RWPE1 (cell line): ENCODE measurements at regions of chr9 and their contacts with region 1.

Region 1: GRCh38 chr9:134738869-134739659 is 97.5 kb downstream of the COL5A1 start:
- DNase-seq: peak; percentile 90
- H3K27ac ChIP-seq: peak overlapping the region; percentile 10
- CTCF ChIP-seq: peak; percentile 98

Region 2: DNA sequence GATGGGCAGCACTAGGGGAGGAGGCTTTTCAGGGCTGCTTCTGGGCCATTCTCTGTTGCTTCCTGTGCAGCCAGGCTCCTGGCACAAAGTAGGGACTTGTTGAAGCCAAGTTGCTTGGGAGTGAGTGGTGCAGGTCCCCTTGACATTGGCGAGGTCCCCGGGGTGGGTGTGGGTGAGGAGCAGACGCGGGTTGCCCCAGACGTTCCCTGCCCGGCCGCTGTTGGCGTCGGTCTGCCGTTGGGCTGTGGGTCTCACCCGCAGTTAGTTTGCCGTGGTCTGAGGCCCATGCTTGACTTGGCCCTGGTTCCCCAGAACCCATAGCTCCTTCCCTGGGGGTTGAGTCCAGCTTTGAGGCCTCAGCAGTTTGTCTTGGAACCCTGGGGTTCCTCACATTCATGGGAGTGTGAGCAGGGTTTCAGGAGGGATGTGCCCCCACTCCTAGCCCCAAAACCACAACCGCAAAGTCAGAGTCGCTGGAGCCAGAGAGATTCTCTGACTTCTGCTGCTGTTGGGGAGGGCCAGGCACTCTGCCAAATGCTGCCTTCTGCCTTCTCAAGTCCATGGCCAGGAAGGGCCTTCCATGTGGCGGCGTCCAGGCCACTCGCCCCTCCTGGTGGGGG is 335.3 kb before region 1 on chr9:
- CTCF ChIA-PET with region 1: no interaction called
- POLR2A ChIA-PET with region 1: no interaction called
- DNase-seq: no peak
- H3K27ac ChIP-seq: peak overlapping the region; percentile 97
- CTCF ChIP-seq: no peak

Region 3: DNA sequence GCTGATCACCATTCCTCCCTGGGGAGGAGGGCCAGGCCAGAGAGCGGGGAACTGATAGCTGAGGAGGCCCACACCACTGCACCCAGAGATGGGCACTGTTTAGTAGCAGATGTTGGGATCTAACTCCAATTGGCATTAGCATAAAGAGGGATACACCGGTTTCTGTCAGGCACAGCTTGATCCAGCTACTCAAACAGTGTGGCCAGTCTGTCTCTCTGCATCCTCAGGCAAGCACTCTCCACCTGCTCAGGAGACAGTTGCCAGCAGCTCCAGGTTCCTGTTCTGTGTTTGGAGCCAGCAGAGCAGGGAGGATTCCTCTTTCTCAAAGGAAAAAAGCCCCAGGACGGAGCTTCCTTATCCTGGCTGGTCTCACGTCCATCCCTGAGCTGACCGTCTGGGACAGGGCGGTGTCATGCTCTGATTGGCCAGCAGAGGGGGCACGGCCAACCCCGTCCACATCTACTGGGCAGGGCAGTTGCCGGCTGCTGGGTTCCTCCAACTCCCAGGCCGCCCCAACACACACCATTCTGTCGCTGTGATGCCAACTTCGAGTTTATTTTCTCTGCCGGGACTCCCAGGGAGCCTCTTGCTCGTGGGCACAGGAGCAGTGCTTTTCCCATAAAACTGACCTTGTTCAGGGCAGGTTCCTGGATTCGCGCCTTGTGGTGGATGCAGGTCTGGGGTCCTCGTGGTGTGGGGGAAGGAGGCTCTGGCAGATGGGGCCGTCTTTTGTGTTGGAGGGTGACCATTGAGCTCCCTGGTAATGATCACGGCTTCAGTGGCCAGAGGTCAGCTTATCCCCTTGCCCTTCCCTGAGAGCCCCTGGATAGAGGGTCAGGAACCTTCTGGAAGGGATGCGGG is 49.5 kb before region 1 on chr9:
- CTCF ChIA-PET with region 1: interaction called, 14 read pairs
- POLR2A ChIA-PET with region 1: interaction called, 5 read pairs
- DNase-seq: peak; percentile 87
- H3K27ac ChIP-seq: peak overlapping the region; percentile 20
- CTCF ChIP-seq: peak; percentile 97

Region 4: GRCh38 chr9:134698587-134699342 is 40.3 kb before region 1 on chr9:
- CTCF ChIA-PET with region 1: interaction called, 44 read pairs
- POLR2A ChIA-PET with region 1: no interaction called
- DNase-seq: peak; percentile 79
- H3K27ac ChIP-seq: peak overlapping the region; percentile 88
- CTCF ChIP-seq: peak; percentile 99

Region 5: GRCh38 chr9:134896005-134896833 is 157.2 kb after region 1 on chr9:
- CTCF ChIA-PET with region 1: no interaction called
- POLR2A ChIA-PET with region 1: no interaction called
- DNase-seq: peak; percentile 84
- H3K27ac ChIP-seq: peak overlapping the region; percentile 61
- CTCF ChIP-seq: no peak

Region 6: DNA sequence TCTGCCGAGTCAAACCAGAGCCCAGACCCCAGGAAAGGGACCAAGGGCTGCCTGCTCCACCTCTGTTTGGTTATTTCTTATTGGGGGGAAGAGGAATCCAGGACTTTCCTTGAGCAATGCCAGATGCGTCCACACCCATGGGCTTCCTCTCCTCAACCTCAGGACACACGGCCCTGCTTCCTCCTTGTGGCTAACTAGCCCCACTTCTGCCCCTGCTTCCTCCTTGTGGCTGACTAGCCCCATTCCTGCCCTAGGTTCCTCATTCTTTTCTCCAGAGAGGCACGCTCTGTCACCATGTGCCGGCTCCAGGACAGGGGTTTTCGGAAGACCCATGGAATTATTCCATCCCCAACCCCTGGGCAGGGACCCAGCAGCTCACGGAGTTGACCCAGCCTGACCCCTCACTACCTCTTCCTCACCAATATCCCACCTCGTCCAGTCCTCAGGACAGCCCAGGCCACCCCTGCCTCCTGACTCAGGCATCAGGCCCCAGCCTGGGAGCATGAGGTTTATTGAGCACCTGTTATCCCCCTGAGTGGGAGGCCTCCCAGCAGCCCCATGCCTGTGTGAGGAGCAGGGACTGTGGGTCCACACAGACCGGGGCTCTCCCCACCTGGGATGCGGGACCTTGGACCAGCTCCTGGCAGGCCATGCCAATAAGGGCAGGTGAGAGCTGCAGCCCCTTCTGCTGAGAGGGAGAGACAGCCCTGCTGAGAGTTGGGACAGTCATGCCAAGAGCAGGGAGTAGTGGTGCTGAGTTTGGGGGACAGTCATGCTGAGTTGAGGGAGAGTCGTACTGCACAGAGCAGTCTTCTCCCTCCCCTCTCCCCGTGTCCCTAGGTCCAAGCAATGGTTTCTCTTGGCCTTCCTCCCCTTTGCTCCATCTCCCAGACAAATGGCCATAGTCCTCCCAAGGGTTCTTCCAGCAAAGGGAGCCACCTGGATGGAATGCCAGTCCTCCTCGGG is 190.4 kb after region 1 on chr9:
- CTCF ChIA-PET with region 1: no interaction called
- POLR2A ChIA-PET with region 1: no interaction called
- DNase-seq: no peak
- H3K27ac ChIP-seq: no peak overlapping the region
- CTCF ChIP-seq: no peak

Region 7: DNA sequence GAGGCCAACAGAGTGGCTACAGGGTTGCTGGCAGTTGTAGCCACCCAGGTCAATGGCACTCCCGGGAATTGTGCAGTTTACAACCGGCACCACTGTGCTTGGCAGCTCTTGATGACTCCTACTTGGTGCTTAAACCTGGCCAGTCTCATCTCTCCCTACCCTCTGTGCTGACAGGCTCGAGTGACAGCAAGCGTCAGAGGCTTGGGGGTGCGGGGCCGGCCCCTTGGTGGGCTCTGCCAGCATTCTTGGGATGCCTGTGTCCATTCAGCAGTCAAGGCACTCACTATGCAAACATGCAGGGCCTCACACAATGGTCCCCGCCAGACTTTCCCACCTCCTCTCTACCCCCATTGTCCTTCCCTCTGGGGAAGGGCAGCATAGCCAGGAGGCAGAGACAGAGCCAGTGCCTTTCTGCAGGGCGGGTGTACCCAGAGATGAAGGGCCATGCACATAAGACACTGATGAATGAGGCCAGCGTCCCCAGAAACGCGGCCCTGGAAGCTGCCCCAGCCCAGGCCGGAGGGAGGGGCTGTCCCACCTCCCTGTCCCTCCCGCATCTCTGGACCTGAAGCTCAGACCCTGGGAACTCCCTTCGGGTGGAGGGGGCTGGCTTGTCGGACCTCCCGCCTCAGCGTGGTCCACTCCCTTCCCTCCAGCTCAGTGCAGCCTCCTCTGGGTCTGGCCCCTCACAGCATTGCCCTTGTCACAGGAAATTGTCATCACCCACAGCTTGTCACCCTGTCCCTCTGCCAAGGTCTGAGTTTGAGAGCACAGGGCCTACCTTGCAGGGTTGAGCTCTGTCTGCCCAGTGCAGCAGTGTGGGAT is 1833.2 kb after region 1 on chr9:
- CTCF ChIA-PET with region 1: no interaction called
- POLR2A ChIA-PET with region 1: no interaction called
- DNase-seq: no peak
- H3K27ac ChIP-seq: peak overlapping the region; percentile 97
- CTCF ChIP-seq: no peak